PC-3 (cell line): ENCODE measurements at regions of chr10 and their contacts with region 1.

Region 1: GRCh38 chr10:60048091-60048501 is 141.7 kb upstream of the CCDC6 start:
- DNase-seq: peak; percentile 87
- ATAC-seq: peak; percentile 82
- H3K4me3 ChIP-seq: no peak overlapping the region
- H3K27ac ChIP-seq: no peak overlapping the region
- H3K4me1 ChIP-seq: peaks cover 15% of the 10 kb centered on the region
- H3K27me3 ChIP-seq: no peaks in the 10 kb centered on the region
- CTCF ChIP-seq: peak; percentile 90

Region 2: GRCh38 chr10:59393349-59393748 is 654.7 kb before region 1 on chr10:
- CTCF ChIA-PET with region 1: no interaction called
- POLR2A ChIA-PET with region 1: no interaction called
- intact Hi-C with region 1: no loop called
- DNase-seq: peak; percentile 46
- ATAC-seq: no peak
- H3K4me3 ChIP-seq: no peak overlapping the region
- H3K27ac ChIP-seq: no peak overlapping the region
- H3K4me1 ChIP-seq: peaks cover 14% of the 10 kb centered on the region
- H3K27me3 ChIP-seq: no peaks in the 10 kb centered on the region
- CTCF ChIP-seq: no peak

Region 3: DNA sequence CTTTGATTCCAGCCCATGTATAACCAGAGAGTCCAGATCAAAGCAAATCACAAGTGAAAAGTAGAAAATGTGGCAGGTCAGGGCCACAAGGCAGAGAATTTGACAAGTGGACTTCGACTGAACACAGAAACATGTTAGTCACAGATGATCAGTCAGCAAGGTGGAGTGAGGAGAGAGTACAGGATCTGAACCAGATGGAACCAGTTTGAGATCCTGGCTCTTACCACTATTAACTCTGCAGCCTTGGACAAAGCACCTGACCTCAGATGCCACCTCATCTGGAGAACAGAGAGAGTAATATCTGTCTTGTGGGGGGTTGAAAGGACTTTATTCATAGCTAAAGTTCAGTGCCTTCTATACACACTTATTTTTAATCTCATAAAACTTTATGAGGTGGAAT is 299.3 kb before region 1 on chr10:
- CTCF ChIA-PET with region 1: no interaction called
- POLR2A ChIA-PET with region 1: no interaction called
- intact Hi-C with region 1: no loop called
- DNase-seq: peak; percentile 82
- ATAC-seq: peak; percentile 93
- H3K4me3 ChIP-seq: no peak overlapping the region
- H3K27ac ChIP-seq: peak overlapping the region; percentile 76
- H3K4me1 ChIP-seq: peaks cover 14% of the 10 kb centered on the region
- H3K27me3 ChIP-seq: no peaks in the 10 kb centered on the region
- CTCF ChIP-seq: no peak

Region 4: GRCh38 chr10:59817773-59818172 is 230.3 kb before region 1 on chr10:
- CTCF ChIA-PET with region 1: no interaction called
- POLR2A ChIA-PET with region 1: no interaction called
- intact Hi-C with region 1: loop called (anchors 5 kb)
- DNase-seq: no peak
- ATAC-seq: no peak
- H3K4me3 ChIP-seq: no peak overlapping the region
- H3K27ac ChIP-seq: no peak overlapping the region
- H3K4me1 ChIP-seq: no peaks in the 10 kb centered on the region
- H3K27me3 ChIP-seq: no peaks in the 10 kb centered on the region
- CTCF ChIP-seq: no peak

Region 5: GRCh38 chr10:59830601-59831259 is 217.4 kb before region 1 on chr10:
- CTCF ChIA-PET with region 1: no interaction called
- POLR2A ChIA-PET with region 1: no interaction called
- intact Hi-C with region 1: loop called (anchors 2 kb)
- DNase-seq: peak; percentile 88
- ATAC-seq: peak; percentile 92
- H3K4me3 ChIP-seq: no peak overlapping the region
- H3K27ac ChIP-seq: no peak overlapping the region
- H3K4me1 ChIP-seq: no peaks in the 10 kb centered on the region
- H3K27me3 ChIP-seq: no peaks in the 10 kb centered on the region
- CTCF ChIP-seq: peak; percentile 98

Region 6: DNA sequence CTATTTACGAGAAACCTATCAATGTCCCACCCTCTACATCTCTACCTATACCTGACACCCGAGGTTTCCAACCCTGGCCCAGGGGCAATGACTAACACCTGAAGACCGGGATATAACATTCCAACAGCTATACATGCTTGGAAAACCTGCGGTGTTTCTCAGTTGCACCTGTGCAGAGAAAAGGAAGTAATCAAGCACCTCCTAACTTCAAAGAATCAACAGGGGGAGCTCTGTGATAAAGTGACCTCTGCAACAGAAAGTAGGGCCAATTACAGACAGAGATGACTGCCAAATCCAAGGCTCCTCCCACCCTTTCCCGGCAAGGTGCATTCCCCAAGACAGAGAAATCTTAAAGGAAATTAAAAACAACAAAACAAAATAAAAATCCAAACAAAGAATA is 183.0 kb before region 1 on chr10:
- CTCF ChIA-PET with region 1: no interaction called
- POLR2A ChIA-PET with region 1: no interaction called
- intact Hi-C with region 1: loop called (anchors 1 kb)
- DNase-seq: peak; percentile 90
- ATAC-seq: peak; percentile 81
- H3K4me3 ChIP-seq: no peak overlapping the region
- H3K27ac ChIP-seq: no peak overlapping the region
- H3K4me1 ChIP-seq: peaks cover 19% of the 10 kb centered on the region
- H3K27me3 ChIP-seq: no peaks in the 10 kb centered on the region
- CTCF ChIP-seq: peak; percentile 93

Region 7: DNA sequence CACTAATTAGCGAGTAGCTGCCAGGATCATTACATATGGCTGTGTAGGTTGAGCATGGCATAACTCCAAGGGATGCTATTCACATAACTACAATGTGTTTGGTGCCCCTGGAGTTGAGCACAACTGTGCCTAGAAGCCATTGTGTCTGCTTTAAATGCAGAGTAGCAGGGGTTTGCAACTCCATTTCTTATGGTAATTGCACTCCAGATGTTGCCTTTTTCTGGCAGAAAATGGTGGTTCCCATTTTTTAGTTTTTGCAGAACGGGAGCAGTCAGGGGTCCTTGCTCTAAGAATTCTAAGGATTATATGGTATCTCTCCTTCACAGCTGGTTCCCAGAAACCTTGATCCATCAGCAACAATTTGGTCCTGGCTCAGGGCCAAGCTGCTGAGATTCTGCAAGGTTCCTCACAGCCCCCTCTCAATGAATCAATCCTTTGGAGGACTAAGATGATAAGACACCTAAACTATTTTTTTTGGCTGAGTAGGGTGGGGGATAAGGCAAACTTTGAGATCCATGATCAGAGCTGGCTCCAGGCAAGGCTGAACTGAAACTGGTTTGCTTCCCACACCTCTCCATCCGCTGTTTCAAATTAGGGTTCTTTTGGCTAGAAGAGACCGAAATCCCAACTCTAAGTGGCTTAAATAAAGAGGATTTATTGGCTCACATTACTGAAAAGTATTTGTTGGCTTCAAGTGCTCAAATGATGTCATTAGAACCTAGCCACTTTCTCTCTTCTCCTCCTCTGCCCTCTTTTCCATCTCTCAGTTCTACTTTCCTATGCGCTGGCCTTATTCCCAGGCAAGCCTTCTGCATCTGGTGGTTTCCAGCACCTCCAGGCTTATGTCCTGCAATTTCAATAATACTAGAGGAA is 44.2 kb before region 1 on chr10:
- CTCF ChIA-PET with region 1: no interaction called
- POLR2A ChIA-PET with region 1: no interaction called
- intact Hi-C with region 1: no loop called
- DNase-seq: no peak
- ATAC-seq: no peak
- H3K4me3 ChIP-seq: no peak overlapping the region
- H3K27ac ChIP-seq: no peak overlapping the region
- H3K4me1 ChIP-seq: peaks cover 3% of the 10 kb centered on the region
- H3K27me3 ChIP-seq: no peaks in the 10 kb centered on the region
- CTCF ChIP-seq: no peak